ENCODE measurements at regions of chr1 and their contacts with region 1.

Region 1: DNA sequence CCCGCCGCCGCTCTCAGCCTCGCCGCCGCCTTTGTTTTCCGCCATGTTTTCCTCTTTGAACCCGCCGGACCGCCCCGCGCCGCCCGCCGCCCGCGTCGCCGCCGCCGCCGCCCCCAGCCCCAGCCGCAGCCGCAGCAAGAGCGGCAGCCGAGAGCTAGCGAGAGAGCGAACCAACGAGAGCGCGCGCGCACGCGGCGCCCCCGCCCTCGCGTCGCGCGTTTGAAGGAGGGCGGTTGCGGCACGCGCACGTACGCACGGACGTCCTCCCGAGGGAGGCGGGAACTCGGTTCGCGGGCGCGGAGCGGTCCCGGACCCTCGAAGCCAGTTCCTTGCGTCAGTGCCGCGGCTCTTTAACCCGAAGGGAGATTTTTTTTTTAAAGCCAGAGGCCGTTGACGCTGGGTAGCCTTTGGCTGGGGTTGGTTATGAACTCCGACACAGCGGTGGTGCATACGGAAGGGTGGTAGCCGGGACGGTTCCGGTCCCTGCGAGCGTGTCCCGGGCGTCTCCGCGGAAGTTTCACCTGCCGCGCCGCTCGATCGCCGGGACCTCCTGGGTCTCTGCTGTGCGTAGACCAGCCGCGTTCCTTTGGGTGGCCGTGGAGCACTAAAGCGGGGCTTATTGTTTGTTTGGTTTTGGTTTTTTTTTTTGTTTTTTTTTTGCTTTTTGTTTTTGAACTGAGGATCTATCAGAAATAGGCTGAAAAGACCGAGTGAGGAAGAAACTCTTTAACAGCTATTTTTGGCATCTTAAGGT is at the start of gene TRIM33:
- DNase-seq: peak; percentile 91
- H3K4me3 Mint-ChIP-seq: peak within 1 kb of the TSS; percentile 88
- H3K27ac Mint-ChIP-seq: peak within 1 kb of the TSS; percentile 97
- H3K4me1 Mint-ChIP-seq: peaks cover 41% of the 10 kb centered on the region
- H3K27me3 Mint-ChIP-seq: no peaks in the 10 kb centered on the region
- total RNA-seq, gene TRIM33: 41.5 and 44.7 TPM in 2 replicates

Region 2: GRCh38 chr1:114467488-114467887 is 43.7 kb before region 1 on chr1:
- intact Hi-C with region 1: loop called (anchors 5 kb)
- DNase-seq: no peak
- H3K4me3 Mint-ChIP-seq: peak overlapping the region; percentile 31
- H3K27ac Mint-ChIP-seq: no peak overlapping the region
- H3K4me1 Mint-ChIP-seq: peaks cover 36% of the 10 kb centered on the region
- H3K27me3 Mint-ChIP-seq: no peaks in the 10 kb centered on the region

Region 3: GRCh38 chr1:115041654-115042053 is 530.4 kb after region 1 on chr1:
- intact Hi-C with region 1: no loop called
- DNase-seq: no peak
- H3K4me3 Mint-ChIP-seq: no peak overlapping the region
- H3K27ac Mint-ChIP-seq: no peak overlapping the region
- H3K4me1 Mint-ChIP-seq: no peaks in the 10 kb centered on the region
- H3K27me3 Mint-ChIP-seq: peaks cover 8% of the 10 kb centered on the region

Measured in activated T-helper 2 cell treated with anti-CD3 and anti-CD28 coated beads, Interferon-gamma antibody, Interleukin-2, Interleukin-4, amounts not matched to agents 10 μg/mL and 5 μg/mL and 100 μg/mL, durations not matched to agents 14 hours and 24 hours and 36 hours (primary cell).